ENCODE measurements at regions of chr17 and their contacts with region 1.

Region 1: GRCh38 chr17:700504-701094 is 14.0 kb downstream of the VPS53 start:
- DNase-seq: no peak
- H3K4me3 ChIP-seq: no peak overlapping the region
- CTCF ChIP-seq: peak; percentile 27

Region 2: DNA sequence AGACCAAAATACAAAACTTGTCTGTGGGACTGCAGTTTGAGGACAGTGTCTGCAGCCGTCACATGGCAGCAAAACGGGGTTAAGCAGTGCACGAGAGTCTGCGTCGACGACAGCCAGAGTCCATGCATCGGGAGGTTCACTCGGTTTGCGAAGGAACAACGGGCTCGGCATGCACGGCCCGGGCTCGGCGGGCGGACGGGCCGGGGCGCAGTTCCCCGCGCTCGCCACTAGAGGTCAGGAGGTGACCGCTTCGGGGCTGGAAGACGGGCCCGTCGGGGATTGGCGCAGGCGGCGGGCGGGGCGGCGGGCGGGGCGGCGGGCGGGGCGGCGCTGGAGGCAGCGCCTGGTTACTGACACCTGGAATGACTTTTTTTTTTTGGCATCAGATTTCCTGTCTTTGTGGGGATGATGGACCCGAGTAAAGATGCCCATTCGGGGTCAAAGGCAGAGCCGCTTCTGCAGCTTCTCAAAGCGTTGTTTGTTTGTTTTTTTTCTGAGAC is 556.8 kb before region 1 on chr17:
- CTCF ChIA-PET with region 1: interaction called, 17 read pairs
- POLR2A ChIA-PET with region 1: no interaction called
- DNase-seq: no peak
- H3K4me3 ChIP-seq: no peak overlapping the region
- CTCF ChIP-seq: peak; percentile 88

Region 3: GRCh38 chr17:385926-386876 is 314.4 kb before region 1 on chr17:
- CTCF ChIA-PET with region 1: interaction called, 34 read pairs
- POLR2A ChIA-PET with region 1: no interaction called
- DNase-seq: no peak
- H3K4me3 ChIP-seq: peak overlapping the region; percentile 52
- CTCF ChIP-seq: peak; percentile 78

Region 4: DNA sequence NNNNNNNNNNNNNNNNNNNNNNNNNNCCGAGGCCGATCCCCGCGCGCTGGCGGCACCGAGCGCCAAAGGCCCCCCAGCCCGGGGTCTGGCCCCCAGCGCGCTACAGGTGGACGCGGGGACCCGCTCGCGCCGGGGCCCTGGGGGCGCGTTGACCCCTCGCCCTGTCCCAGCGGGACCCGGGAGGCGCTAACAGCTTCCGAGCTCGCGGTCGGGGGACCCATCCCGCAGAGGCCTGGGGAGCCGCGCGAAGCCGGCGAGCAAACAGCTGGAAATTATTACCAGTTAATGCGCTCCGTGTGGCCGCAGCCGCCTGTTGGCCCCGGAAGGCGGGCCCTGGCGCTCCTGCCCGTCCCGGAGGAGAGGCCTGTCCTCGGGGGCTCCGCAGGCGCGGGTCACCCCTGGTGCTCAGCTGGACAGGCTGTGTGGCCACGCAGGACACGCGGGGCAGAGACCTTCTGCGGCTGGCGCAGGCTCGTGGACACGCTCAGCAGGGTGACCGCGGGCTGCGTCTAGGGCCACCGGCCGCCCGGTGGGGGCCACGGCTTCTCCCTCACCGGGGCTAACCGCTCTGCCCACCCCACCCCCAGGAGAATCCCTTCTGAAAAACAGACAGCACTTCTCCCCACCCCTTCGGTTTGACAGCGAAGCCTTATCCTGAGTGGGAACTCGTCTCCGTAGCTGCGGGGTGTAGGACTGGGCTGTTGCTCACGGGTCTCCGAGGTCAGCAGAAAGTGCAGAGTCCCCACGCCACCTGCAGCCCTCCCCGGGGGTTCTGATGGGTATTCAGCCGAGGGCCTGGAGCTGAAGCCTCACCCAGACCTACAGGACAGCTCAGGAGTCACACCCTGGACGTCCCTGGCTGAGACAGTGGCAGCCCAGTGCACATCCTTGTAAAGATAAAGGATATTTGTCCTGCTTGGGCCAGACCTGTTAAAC is 209.2 kb before region 1 on chr17:
- CTCF ChIA-PET with region 1: interaction called, 11 read pairs
- POLR2A ChIA-PET with region 1: no interaction called
- DNase-seq: no peak
- H3K4me3 ChIP-seq: peak overlapping the region; percentile 57
- CTCF ChIP-seq: peak; percentile 7

Region 5: DNA sequence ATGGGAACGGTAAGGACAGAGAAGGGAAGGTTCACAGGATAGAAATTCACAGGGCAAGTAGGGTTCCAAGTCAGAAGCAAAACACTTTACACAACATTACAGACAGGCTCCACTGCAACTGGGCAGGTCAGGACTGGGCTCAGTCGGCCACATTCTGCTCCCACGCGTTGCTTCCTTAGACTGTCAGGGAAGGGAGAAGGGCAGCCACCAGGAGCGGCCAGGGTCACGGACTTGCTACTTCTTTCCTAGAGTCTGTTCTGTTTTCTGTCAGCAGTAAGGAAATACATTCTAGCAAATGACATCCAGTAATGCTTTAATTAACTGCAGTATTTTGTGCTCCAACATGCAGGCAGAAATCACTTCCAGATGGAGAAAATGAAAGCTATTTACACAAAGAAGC is 187.7 kb before region 1 on chr17:
- CTCF ChIA-PET with region 1: interaction called, 16 read pairs
- POLR2A ChIA-PET with region 1: no interaction called
- DNase-seq: no peak
- H3K4me3 ChIP-seq: peak overlapping the region; percentile 31
- CTCF ChIP-seq: no peak

Region 6: GRCh38 chr17:688100-688989 is 12.3 kb before region 1 on chr17:
- CTCF ChIA-PET with region 1: interaction called, 27 read pairs
- POLR2A ChIA-PET with region 1: no interaction called
- DNase-seq: no peak
- H3K4me3 ChIP-seq: no peak overlapping the region
- CTCF ChIP-seq: peak; percentile 35

Region 7: GRCh38 chr17:979538-980405 is 279.2 kb after region 1 on chr17 and contains the start of gene NXN:
- CTCF ChIA-PET with region 1: interaction called, 13 read pairs
- POLR2A ChIA-PET with region 1: no interaction called
- DNase-seq: no peak
- H3K4me3 ChIP-seq: peak within 1 kb of the TSS; percentile 87
- CTCF ChIP-seq: peak; percentile 47

Measured in AG04449 (cell line).